Naive thymus-derived CD8-positive, alpha-beta T cell (primary cell): ENCODE measurements at regions of chr2 and their contacts with region 1.

Region 1: GRCh38 chr2:197705121-197705911 is at the start of gene MARS2:
- DNase-seq: peak; percentile 86 to 96 (median 93)
- ATAC-seq: peak; percentile 81 to 84
- H3K4me3 Mint-ChIP-seq: peak within 1 kb of the TSS; percentile 85 to 95 (median 92)
- H3K27ac Mint-ChIP-seq: peak within 1 kb of the TSS; percentile 92 to 99 (median 96)
- H3K4me1 Mint-ChIP-seq: peaks cover 26 to 54% (median 46%) of the 10 kb centered on the region in 4 donors
- H3K27me3 Mint-ChIP-seq: peaks cover 0 to 9% (median 1%) of the 10 kb centered on the region in 5 donors
- polyA plus RNA-seq, gene MARS2: 8.4 to 12.7 (median 12.5) TPM

Region 2: DNA sequence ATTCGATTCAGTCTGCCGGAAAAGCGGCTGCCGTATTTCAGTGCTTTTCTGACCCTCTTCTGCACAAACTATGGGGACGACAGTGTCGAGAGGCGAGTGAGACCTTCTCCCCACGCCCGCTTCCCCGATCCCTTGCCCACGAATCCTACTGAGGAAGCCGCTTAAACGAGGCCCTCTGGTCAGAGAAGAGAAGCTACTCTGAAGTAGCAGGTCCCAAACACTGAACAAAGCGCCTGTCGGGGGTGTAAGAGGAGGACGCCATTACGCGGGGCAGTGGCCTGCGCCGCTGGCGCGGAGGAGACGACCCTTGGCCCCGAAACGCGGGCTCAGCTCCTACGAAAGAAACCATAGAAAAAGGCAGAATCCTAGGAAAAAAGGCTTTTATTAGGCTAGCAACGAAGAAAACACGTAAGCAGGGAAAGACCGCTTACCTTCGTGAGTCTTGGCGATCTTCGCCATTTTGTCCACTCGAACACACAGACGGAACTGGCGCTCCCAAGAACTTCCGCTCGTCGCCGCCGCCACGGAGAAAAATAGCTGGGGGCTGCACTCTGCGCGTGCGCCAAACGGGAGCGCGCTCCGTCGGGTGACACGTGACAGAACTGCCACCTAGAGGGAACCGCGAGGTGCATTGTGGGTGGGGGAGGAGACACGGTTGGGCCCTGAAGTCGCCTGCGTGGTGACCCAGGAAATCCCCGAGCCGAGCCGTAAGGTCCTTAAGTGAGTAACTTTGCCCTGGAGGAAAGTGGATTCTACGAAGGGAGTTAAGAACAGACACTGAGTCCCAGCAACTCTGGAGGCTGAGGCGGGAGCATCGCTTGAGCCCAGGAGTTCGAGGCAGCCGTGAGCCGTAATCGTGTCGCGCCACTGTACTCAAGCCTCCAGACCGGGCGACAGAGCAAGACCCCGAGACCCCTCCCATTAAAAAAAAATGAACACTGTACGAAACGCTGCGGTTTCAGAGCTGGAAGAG is 270.5 kb before region 1 on chr2 and contains the start of gene SF3B1:
- POLR2A ChIA-PET with region 1: interaction called, 19 read pairs
- DNase-seq: peak; percentile 96 to 99 (median 99)
- ATAC-seq: peak; percentile 92 to 94
- H3K4me3 Mint-ChIP-seq: peak within 1 kb of the TSS; percentile 92 to 100 (median 99)
- H3K27ac Mint-ChIP-seq: peak within 1 kb of the TSS; percentile 100
- H3K4me1 Mint-ChIP-seq: peaks cover 32 to 57% (median 54%) of the 10 kb centered on the region in 4 donors
- H3K27me3 Mint-ChIP-seq: no peaks in the 10 kb centered on the region
- polyA plus RNA-seq, gene SF3B1: 120 to 131 (median 120) TPM

Region 3: GRCh38 chr2:197453161-197453914 is 252.0 kb before region 1 on chr2 and contains the start of gene COQ10B:
- POLR2A ChIA-PET with region 1: interaction called, 10 read pairs
- DNase-seq: peak; percentile 92 to 99 (median 98)
- ATAC-seq: peak; percentile 85 to 88
- H3K4me3 Mint-ChIP-seq: peak within 1 kb of the TSS; percentile 98 to 100 (median 100)
- H3K27ac Mint-ChIP-seq: peak within 1 kb of the TSS; percentile 100
- H3K4me1 Mint-ChIP-seq: peaks cover 22 to 54% (median 47%) of the 10 kb centered on the region in 4 donors
- H3K27me3 Mint-ChIP-seq: no peaks in the 10 kb centered on the region
- polyA plus RNA-seq, gene COQ10B: 30.0 to 43.4 (median 39.4) TPM

Region 4: DNA sequence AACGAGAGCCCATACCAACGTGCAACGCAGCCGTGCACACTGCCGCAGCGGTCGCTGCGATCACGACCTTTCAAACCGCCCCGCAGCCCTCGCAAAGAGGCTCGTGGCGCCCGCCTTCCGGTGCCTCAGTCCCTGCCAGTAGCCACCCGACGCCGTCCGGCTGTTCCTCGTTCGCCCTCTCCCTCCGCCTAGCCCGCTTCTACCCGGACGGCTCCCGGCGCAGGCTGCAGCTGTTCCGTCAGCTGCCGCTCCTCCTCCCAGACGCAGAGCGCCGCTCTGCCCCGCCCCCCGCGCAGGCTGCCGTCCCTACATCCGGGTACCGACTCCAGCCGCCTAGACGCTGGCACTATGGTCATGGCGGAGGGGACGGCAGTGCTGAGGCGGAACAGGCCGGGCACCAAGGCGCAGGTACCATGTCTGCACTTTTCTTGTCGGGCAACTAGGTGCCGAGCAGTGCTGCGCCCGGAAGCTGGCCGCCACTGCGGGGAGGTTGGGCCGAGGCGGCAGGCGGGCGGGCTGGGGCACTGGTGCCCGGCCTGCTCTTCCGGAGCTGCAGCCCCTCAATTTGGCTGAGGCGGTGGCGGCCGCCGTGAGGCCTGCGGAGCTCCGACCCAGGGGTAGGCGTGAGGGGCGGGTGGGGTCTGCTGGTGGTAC is 189.4 kb before region 1 on chr2 and contains the start of gene MOB4:
- POLR2A ChIA-PET with region 1: interaction called, 26 read pairs
- DNase-seq: peak; percentile 87 to 95 (median 92)
- ATAC-seq: peak; percentile 84 to 87
- H3K4me3 Mint-ChIP-seq: peak within 1 kb of the TSS; percentile 80 to 99 (median 94)
- H3K27ac Mint-ChIP-seq: peak within 1 kb of the TSS; percentile 88 to 99 (median 95)
- H3K4me1 Mint-ChIP-seq: peaks cover 17 to 61% (median 35%) of the 10 kb centered on the region in 4 donors
- H3K27me3 Mint-ChIP-seq: no peaks in the 10 kb centered on the region
- polyA plus RNA-seq, gene MOB4: 19.4 to 29.1 (median 23.6) TPM

Region 5: GRCh38 chr2:197798187-197798586 is 92.9 kb after region 1 on chr2:
- POLR2A ChIA-PET with region 1: no interaction called
- DNase-seq: no peak
- ATAC-seq: no peak
- H3K4me3 Mint-ChIP-seq: no peak overlapping the region
- H3K27ac Mint-ChIP-seq: no peak overlapping the region
- H3K4me1 Mint-ChIP-seq: peaks cover 0 to 5% (median 4%) of the 10 kb centered on the region in 4 donors
- H3K27me3 Mint-ChIP-seq: peaks cover 9 to 34% (median 22%) of the 10 kb centered on the region in 5 donors